CD4-positive, alpha-beta memory T cell (primary cell): ENCODE measurements at regions of chr17 and their contacts with region 1.

Region 1: GRCh38 chr17:29760761-29761696 is 138.3 kb upstream of the CORO6 start:
- DNase-seq: peak; percentile 91 to 94 (median 92)
- H3K4me3 ChIP-seq: peak overlapping the region; percentile 37 to 67
- H3K4me3 Mint-ChIP-seq: peak overlapping the region; percentile 92 to 98 (median 94)
- H3K27ac ChIP-seq: peak overlapping the region; percentile 69
- H3K27ac Mint-ChIP-seq: peak overlapping the region; percentile 92 to 98 (median 95)
- H3K4me1 ChIP-seq: peaks cover 41% of the 10 kb centered on the region
- H3K4me1 Mint-ChIP-seq: peaks cover 19 to 57% (median 35%) of the 10 kb centered on the region in 4 donors
- H3K27me3 ChIP-seq: no peaks in the 10 kb centered on the region
- H3K27me3 Mint-ChIP-seq: no peaks in the 10 kb centered on the region

Region 2: GRCh38 chr17:29568331-29569244 is 192.4 kb before region 1 on chr17 and contains the start of gene TP53I13:
- CTCF ChIA-PET with region 1: no interaction called
- POLR2A ChIA-PET with region 1: interaction called, 10 read pairs
- intact Hi-C with region 1: loop called (anchors 5 kb)
- DNase-seq: peak; percentile 78 to 86 (median 83)
- H3K4me3 ChIP-seq: peak within 1 kb of the TSS; percentile 58 to 83
- H3K4me3 Mint-ChIP-seq: peak within 1 kb of the TSS; percentile 92 to 98 (median 96)
- H3K27ac ChIP-seq: peak within 1 kb of the TSS; percentile 61
- H3K27ac Mint-ChIP-seq: peak within 1 kb of the TSS; percentile 92 to 98 (median 95)
- H3K4me1 ChIP-seq: peaks cover 31% of the 10 kb centered on the region
- H3K4me1 Mint-ChIP-seq: peaks cover 23 to 55% (median 34%) of the 10 kb centered on the region in 4 donors
- H3K27me3 ChIP-seq: no peaks in the 10 kb centered on the region
- H3K27me3 Mint-ChIP-seq: no peaks in the 10 kb centered on the region
- total RNA-seq, gene TP53I13: 149 to 158 TPM

Region 3: GRCh38 chr17:29617125-29617480 is 143.9 kb before region 1 on chr17:
- CTCF ChIA-PET with region 1: interaction called, 22 read pairs
- POLR2A ChIA-PET with region 1: interaction called, 39 read pairs
- intact Hi-C with region 1: loop called (anchors 1 kb)
- DNase-seq: peak; percentile 89 to 94 (median 91)
- H3K4me3 ChIP-seq: peak overlapping the region; percentile 64 to 89
- H3K4me3 Mint-ChIP-seq: peak overlapping the region; percentile 82 to 94 (median 92)
- H3K27ac ChIP-seq: peak overlapping the region; percentile 43
- H3K27ac Mint-ChIP-seq: peak overlapping the region; percentile 63 to 89 (median 81)
- H3K4me1 ChIP-seq: peaks cover 62% of the 10 kb centered on the region
- H3K4me1 Mint-ChIP-seq: peaks cover 20 to 51% (median 33%) of the 10 kb centered on the region in 4 donors
- H3K27me3 ChIP-seq: no peaks in the 10 kb centered on the region
- H3K27me3 Mint-ChIP-seq: no peaks in the 10 kb centered on the region

Region 4: GRCh38 chr17:29682054-29682453 is 79.0 kb before region 1 on chr17:
- CTCF ChIA-PET with region 1: interaction called, 3 read pairs
- POLR2A ChIA-PET with region 1: interaction called, 14 read pairs
- intact Hi-C with region 1: no loop called
- DNase-seq: no peak
- H3K4me3 ChIP-seq: no peak overlapping the region
- H3K4me3 Mint-ChIP-seq: no peak overlapping the region
- H3K27ac ChIP-seq: no peak overlapping the region
- H3K27ac Mint-ChIP-seq: peak overlapping the region in 6 of 7 donors; percentile 1 to 69 (median 16)
- H3K4me1 ChIP-seq: peaks cover 8% of the 10 kb centered on the region
- H3K4me1 Mint-ChIP-seq: peaks cover 10 to 21% (median 13%) of the 10 kb centered on the region in 4 donors
- H3K27me3 ChIP-seq: no peaks in the 10 kb centered on the region
- H3K27me3 Mint-ChIP-seq: no peaks in the 10 kb centered on the region

Region 5: DNA sequence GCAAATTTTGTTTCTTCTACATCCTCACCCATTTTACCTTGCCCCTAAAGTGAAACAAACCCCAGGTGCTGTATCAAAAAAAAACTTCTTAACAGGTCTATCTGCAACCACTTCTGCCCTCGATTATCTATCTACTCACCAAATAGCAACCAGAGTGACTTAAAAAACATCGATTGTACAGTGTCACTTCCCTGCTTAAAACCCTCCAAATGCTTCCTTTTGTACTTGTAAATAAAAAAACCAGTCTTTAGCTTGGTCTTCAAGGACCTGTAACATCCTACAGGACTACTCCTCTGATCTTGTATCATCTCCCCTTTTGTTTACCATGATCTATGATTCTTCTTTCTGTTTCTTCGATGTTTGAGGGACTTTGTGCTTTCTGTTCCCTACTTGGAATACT is 55.6 kb before region 1 on chr17:
- CTCF ChIA-PET with region 1: interaction called, 15 read pairs
- POLR2A ChIA-PET with region 1: interaction called, 82 read pairs
- intact Hi-C with region 1: loop called (anchors 1 kb)
- DNase-seq: peak in 4 of 5 donors; percentile 26 to 39 (median 28)
- H3K4me3 ChIP-seq: peak overlapping the region in 1 of 2 donors; percentile 16
- H3K4me3 Mint-ChIP-seq: peak overlapping the region; percentile 58 to 87 (median 76)
- H3K27ac ChIP-seq: peak overlapping the region; percentile 68
- H3K27ac Mint-ChIP-seq: peak overlapping the region; percentile 91 to 100 (median 98)
- H3K4me1 ChIP-seq: peaks cover 54% of the 10 kb centered on the region
- H3K4me1 Mint-ChIP-seq: peaks cover 30 to 61% (median 41%) of the 10 kb centered on the region in 4 donors
- H3K27me3 ChIP-seq: no peaks in the 10 kb centered on the region
- H3K27me3 Mint-ChIP-seq: no peaks in the 10 kb centered on the region

Region 6: DNA sequence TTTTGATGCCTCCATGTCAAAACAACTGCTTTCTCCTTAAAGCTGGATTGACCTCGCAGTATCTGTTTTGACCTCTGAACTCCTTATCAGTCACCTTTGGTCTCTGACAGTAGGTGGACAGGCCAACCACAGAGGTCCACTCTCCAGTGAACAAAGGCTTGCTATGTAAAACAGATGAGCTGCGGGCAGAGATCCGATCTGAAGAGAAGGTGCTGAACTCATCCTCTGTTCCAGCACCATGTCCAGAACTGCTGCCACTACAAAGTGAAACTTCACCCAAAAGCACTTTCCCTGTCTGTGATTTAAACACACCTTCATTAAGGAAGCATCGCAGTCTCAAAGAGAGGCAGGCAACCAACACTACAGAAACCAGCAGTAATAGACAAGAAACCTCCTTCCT is 21.0 kb before region 1 on chr17:
- CTCF ChIA-PET with region 1: no interaction called
- POLR2A ChIA-PET with region 1: interaction called, 6 read pairs
- intact Hi-C with region 1: loop called (anchors 2 kb)
- DNase-seq: no peak
- H3K4me3 ChIP-seq: no peak overlapping the region
- H3K4me3 Mint-ChIP-seq: peak overlapping the region in 4 of 8 donors; percentile 15 to 58 (median 54)
- H3K27ac ChIP-seq: no peak overlapping the region
- H3K27ac Mint-ChIP-seq: peak overlapping the region; percentile 37 to 86 (median 70)
- H3K4me1 ChIP-seq: peaks cover 28% of the 10 kb centered on the region
- H3K4me1 Mint-ChIP-seq: peaks cover 31 to 56% (median 41%) of the 10 kb centered on the region in 4 donors
- H3K27me3 ChIP-seq: no peaks in the 10 kb centered on the region
- H3K27me3 Mint-ChIP-seq: no peaks in the 10 kb centered on the region

Region 7: DNA sequence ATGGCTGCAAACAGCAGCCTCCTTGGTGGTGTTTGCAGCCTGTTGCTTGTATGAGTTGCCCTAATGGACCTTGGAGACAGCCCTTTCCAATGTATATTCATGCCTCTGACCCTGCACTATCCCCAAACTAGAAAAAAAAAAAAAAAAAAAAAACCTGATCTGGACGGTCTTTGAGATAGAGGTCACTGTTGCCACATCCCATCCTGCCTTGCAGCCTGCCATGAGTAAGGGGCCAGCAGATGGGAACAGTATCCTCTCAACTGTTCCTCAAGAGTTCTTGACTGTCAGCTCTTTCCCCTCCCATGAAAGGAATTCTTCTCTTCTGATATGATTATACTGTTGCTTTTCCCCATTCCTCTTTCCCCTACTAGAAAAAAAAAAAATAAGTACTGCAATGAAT is 16.6 kb after region 1 on chr17:
- CTCF ChIA-PET with region 1: interaction called, 22 read pairs
- POLR2A ChIA-PET with region 1: interaction called, 14 read pairs
- intact Hi-C with region 1: loop called (anchors 1 kb)
- DNase-seq: no peak
- H3K4me3 ChIP-seq: no peak overlapping the region
- H3K4me3 Mint-ChIP-seq: no peak overlapping the region
- H3K27ac ChIP-seq: no peak overlapping the region
- H3K27ac Mint-ChIP-seq: no peak overlapping the region
- H3K4me1 ChIP-seq: peaks cover 8% of the 10 kb centered on the region
- H3K4me1 Mint-ChIP-seq: peaks cover 5 to 9% (median 7%) of the 10 kb centered on the region in 4 donors
- H3K27me3 ChIP-seq: no peaks in the 10 kb centered on the region
- H3K27me3 Mint-ChIP-seq: no peaks in the 10 kb centered on the region

Region 8: DNA sequence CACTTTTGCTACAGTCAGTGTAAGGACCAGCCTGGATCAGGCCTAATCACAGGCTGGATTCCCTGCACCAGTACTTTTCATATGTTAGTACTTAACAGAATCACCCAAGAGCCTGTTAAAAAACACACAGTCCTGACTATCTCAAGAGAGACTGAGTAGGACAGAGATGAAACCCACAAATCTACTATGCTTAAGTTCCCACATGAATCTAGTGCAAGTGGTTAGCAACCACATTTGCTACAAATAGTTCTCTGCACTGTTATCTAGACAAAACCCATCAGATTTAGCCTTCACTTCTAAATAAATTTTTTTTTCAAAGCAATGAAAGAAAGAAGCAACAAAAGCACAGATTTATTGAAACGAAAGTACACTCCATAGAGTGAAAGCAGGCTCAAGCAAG is 130.1 kb after region 1 on chr17:
- CTCF ChIA-PET with region 1: no interaction called
- POLR2A ChIA-PET with region 1: no interaction called
- intact Hi-C with region 1: no loop called
- DNase-seq: no peak
- H3K4me3 ChIP-seq: no peak overlapping the region
- H3K4me3 Mint-ChIP-seq: no peak overlapping the region
- H3K27ac ChIP-seq: no peak overlapping the region
- H3K27ac Mint-ChIP-seq: no peak overlapping the region
- H3K4me1 ChIP-seq: no peaks in the 10 kb centered on the region
- H3K4me1 Mint-ChIP-seq: peaks cover 13 to 32% (median 27%) of the 10 kb centered on the region in 4 donors
- H3K27me3 ChIP-seq: no peaks in the 10 kb centered on the region
- H3K27me3 Mint-ChIP-seq: no peaks in the 10 kb centered on the region